Activated naive CD4-positive, alpha-beta T cell treated with anti-CD3 and anti-CD28 coated beads for 36 hours (primary cell): ENCODE measurements at regions of chr1 and their contacts with region 1.

Region 1: DNA sequence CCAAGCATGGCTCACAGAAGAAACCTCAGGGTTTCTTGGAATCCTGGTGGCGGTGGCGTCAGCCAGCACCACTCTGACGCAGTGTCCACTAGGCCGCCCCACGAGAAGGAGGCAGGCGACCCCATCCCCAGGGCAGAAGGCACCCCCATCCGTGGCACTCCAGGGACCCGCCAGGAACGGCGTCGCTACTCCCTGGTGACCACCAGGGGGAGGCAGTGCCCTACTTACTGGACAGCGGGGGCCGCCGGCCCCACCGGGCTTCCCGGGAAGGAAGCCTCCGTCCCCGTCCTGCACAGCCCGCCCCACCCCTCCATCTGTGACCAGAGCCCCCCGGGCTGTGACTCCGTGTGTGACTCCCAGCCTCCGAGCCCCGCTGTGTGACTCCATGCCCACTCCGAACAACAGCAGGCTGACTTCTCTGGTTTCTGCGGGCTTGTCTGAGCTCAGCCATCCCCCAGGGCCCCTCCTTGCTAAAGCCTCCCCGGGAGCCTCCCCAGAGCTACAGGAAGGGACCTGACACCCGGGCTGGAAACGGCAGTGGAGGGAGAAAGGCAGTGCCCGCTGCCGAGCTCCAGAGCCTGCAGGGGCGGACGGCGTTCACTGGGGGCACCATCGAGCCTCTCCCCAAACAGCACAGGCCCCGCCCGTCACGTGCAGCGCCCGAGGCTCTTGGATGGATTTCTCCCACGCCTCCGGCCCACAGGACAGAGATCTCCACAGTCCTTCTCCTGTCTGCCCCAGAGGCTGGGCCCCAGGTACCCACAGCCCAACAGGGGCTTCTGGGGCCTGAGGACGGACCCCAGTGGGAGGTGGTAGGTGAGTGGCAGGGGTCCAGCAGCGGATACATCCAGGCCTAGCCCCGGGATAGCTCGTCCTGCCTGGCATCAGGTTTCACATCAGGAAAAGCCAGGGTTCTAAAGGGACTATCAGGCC is 21.1 kb downstream of the KIF17 start:
- DNase-seq: peak; percentile 86
- H3K4me3 Mint-ChIP-seq: peak overlapping the region; percentile 77
- H3K27ac Mint-ChIP-seq: peak overlapping the region; percentile 50
- H3K4me1 Mint-ChIP-seq: peaks cover 5% of the 10 kb centered on the region
- H3K27me3 Mint-ChIP-seq: no peaks in the 10 kb centered on the region

Region 2: DNA sequence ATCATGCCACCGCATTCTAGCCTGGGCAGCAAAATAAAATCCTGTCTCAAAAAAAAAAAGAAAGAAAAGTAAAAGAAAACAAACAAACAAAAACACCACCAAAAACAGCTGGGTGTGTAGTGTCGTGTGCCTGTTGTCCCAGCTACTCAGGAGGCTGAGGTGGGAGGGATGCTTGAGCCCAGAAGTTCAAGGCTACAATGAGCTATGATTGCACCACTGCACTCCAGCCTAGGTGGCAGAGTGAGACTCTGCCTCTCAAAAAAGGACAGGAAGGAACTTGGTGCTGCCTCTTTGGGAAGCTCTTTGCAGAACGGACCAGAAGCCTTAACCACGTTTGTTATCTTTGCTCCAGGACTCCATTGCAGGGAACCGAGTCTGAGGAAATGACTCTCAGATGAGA is 10.2 kb after region 1 on chr1:
- CTCF ChIA-PET with region 1: interaction called, 17 read pairs
- intact Hi-C with region 1: no loop called
- DNase-seq: no peak
- H3K4me3 Mint-ChIP-seq: no peak overlapping the region
- H3K27ac Mint-ChIP-seq: no peak overlapping the region
- H3K4me1 Mint-ChIP-seq: no peaks in the 10 kb centered on the region
- H3K27me3 Mint-ChIP-seq: no peaks in the 10 kb centered on the region

Region 3: DNA sequence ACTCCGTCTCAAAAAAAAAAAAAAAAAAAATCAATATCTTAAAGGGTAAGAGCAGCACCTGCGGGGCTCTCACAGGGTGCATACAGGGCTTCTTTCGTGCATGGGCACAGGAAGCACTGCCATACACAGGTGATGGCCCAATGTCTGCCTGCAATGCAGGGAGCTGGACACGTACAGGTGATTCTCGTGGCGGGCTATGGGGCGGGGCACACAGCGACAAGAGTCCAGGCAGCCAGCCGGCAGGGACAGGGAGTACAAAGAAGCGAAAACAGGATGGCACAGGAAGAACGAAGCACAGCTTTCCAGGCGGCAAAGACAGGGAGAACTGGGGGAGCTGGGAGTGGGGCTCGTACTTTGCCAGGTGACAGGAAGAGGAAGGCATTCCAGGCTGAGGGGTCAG is 19.6 kb after region 1 on chr1:
- CTCF ChIA-PET with region 1: interaction called, 14 read pairs
- intact Hi-C with region 1: no loop called
- DNase-seq: no peak
- H3K4me3 Mint-ChIP-seq: no peak overlapping the region
- H3K27ac Mint-ChIP-seq: no peak overlapping the region
- H3K4me1 Mint-ChIP-seq: peaks cover 6% of the 10 kb centered on the region
- H3K27me3 Mint-ChIP-seq: peaks cover 32% of the 10 kb centered on the region

Region 4: GRCh38 chr1:20732588-20733360 is 36.1 kb after region 1 on chr1 and contains the start of gene SH2D5:
- CTCF ChIA-PET with region 1: interaction called, 10 read pairs
- intact Hi-C with region 1: loop called (anchors 1 kb)
- DNase-seq: peak; percentile 88
- H3K4me3 Mint-ChIP-seq: peak within 1 kb of the TSS; percentile 79
- H3K27ac Mint-ChIP-seq: no peak within 1 kb of the TSS
- H3K4me1 Mint-ChIP-seq: peaks cover 10% of the 10 kb centered on the region
- H3K27me3 Mint-ChIP-seq: peaks cover 32% of the 10 kb centered on the region
- total RNA-seq, gene SH2D5: 0.15 to 0.29 TPM

Region 5: GRCh38 chr1:21200767-21201166 is 504.1 kb after region 1 on chr1:
- CTCF ChIA-PET with region 1: interaction called, 73 read pairs
- intact Hi-C with region 1: loop called (anchors 1 kb)
- DNase-seq: no peak
- H3K4me3 Mint-ChIP-seq: no peak overlapping the region
- H3K27ac Mint-ChIP-seq: no peak overlapping the region
- H3K4me1 Mint-ChIP-seq: no peaks in the 10 kb centered on the region
- H3K27me3 Mint-ChIP-seq: peaks cover 4% of the 10 kb centered on the region